Activated CD8-positive, alpha-beta memory T cell treated with anti-CD3 and anti-CD28 coated beads, Interleukin-2, amount 10 ng/mL, durations not matched to agents 7 days and 5 days (primary cell): ENCODE measurements at regions of chr6 and their contacts with region 1.

Region 1: GRCh38 chr6:25556516-25556915 is 95.5 kb upstream of the SCGN start:
- DNase-seq: peak; percentile 86
- ATAC-seq: peak; percentile 64
- H3K4me3 Mint-ChIP-seq: no peak overlapping the region
- H3K27ac Mint-ChIP-seq: no peak overlapping the region
- H3K4me1 Mint-ChIP-seq: peaks cover 2% of the 10 kb centered on the region
- H3K27me3 Mint-ChIP-seq: no peaks in the 10 kb centered on the region

Region 2: GRCh38 chr6:25006565-25007001 is 549.9 kb before region 1 on chr6:
- CTCF ChIA-PET with region 1: no interaction called
- DNase-seq: peak; percentile 85
- ATAC-seq: peak; percentile 79
- H3K4me3 Mint-ChIP-seq: peak overlapping the region; percentile 38
- H3K27ac Mint-ChIP-seq: peak overlapping the region; percentile 96
- H3K4me1 Mint-ChIP-seq: peaks cover 66% of the 10 kb centered on the region
- H3K27me3 Mint-ChIP-seq: no peaks in the 10 kb centered on the region

Region 3: GRCh38 chr6:25534942-25535631 is 21.4 kb before region 1 on chr6:
- CTCF ChIA-PET with region 1: interaction called, 11 read pairs
- DNase-seq: no peak
- ATAC-seq: no peak
- H3K4me3 Mint-ChIP-seq: no peak overlapping the region
- H3K27ac Mint-ChIP-seq: no peak overlapping the region
- H3K4me1 Mint-ChIP-seq: no peaks in the 10 kb centered on the region
- H3K27me3 Mint-ChIP-seq: no peaks in the 10 kb centered on the region